ENCODE measurements at regions of chr12 and their contacts with region 1.

Region 1: DNA sequence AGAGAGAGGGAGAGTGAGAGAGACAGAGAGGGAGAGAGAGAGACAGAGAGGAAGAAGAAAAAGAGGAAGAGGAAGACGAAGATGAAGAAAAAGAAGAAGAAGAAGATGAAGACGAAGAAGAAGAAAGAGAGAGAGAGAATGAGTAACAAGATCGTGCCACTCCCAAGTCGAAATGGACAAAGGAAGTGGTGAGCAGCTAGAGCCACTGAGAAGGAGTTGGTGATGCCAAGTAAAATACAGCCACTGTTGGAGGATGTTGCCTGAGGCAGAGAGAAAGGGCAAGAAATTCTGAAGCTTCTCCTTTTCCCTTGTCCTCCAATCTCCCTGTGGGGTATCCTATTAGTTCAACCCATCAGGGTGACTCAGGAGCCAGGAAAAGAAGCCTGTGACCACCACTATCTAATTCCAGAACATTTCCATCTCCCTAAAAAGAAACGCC is 12.5 kb upstream of the ANAPC5 start:
- DNase-seq: peak; percentile 1
- H3K4me3 ChIP-seq: no peak overlapping the region
- CTCF ChIP-seq: no peak

Region 2: GRCh38 chr12:121296618-121297434 is 67.9 kb before region 1 on chr12 and contains the start of gene CAMKK2:
- in situ Hi-C with region 1: no loop called
- DNase-seq: peak; percentile 31
- H3K4me3 ChIP-seq: peak within 1 kb of the TSS; percentile 89
- CTCF ChIP-seq: peak; percentile 31

Region 3: GRCh38 chr12:121404734-121405133 is 40.0 kb after region 1 on chr12:
- in situ Hi-C with region 1: loop called (anchors 5 kb)
- DNase-seq: no peak
- H3K4me3 ChIP-seq: no peak overlapping the region
- CTCF ChIP-seq: no peak

Region 4: DNA sequence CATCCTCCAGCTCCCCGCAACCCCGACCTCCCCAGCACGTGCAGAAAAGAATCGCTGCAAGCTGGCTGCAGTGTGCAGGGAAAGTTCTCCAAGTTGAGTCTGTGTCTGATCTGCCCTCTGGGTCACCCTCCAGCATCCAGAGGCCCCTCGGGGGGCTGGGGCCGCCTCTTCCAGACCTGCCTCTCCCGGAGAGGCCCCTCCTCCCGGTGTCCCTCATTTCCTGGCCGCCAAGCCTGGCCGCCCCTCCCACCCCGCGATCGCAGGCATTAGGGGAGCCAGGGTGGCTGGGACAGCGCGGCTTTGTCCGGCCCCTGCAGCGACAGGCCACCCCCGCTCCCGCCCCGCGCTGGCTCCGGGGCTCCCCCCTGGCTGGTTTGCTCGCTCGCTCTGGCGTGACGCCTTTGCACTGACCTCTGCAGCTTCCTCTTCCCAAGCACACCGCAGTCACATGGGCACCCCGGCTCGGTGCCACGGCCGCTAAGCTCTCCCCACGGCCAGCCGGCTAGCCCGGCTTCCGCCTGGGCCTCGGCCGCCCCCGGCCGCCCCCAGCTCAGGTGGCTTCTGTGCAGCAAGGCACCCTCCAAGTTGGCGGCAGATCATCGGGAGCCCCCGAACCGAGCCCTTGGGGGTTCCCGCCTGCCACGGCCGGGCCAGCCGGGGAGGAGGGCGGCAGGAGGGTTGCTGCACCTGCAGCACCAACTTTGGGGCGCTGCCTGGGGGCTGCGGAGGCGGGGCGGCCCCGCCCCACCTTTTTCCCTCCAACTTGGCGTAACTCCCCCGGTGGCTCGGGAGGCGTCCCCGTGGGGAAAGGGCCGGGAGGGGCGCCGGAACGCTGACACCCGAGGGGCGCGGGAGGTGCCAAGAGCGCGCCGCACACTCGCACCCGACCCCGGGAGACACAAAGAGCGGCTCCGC is 172.5 kb after region 1 on chr12:
- in situ Hi-C with region 1: no loop called
- DNase-seq: peak; percentile 16
- H3K4me3 ChIP-seq: peak overlapping the region; percentile 43
- CTCF ChIP-seq: no peak

Measured in astrocyte of the cerebellum (primary cell).